ENCODE measurements at regions of chr17 and their contacts with region 1.

Region 1: DNA sequence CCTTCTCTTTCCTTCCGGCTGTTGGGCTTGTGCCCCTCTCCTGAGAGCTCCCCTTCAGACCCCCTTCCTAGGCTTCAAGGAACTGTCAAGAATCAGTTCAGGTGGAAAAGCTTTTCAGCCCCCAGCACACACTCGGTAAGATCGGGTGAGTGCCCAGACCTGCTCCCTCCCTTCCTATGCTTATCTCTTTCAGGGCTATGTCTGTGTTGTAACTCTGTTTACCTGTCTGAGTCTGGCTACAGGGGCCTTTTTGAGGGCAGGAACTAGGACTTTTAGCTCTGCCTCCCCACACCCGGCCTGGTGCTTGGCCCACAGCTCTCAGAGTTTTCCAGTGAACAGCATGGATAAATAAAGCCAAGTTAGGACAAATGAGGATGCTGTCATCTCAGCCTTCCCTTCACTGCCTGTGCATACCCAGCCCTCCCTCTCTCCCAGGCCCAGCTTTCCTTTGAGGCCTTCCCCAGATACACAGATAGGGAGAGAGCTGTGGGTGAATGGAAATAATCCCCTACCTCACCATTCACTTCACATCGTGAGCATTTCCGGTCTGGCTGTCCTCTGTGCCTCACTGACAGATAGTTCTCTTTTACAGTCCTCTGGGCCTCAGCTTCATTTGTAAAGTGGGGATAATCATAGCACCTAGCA is 5.7 kb upstream of the MRPS23 start:
- DNase-seq: peak; percentile 26

Region 2: DNA sequence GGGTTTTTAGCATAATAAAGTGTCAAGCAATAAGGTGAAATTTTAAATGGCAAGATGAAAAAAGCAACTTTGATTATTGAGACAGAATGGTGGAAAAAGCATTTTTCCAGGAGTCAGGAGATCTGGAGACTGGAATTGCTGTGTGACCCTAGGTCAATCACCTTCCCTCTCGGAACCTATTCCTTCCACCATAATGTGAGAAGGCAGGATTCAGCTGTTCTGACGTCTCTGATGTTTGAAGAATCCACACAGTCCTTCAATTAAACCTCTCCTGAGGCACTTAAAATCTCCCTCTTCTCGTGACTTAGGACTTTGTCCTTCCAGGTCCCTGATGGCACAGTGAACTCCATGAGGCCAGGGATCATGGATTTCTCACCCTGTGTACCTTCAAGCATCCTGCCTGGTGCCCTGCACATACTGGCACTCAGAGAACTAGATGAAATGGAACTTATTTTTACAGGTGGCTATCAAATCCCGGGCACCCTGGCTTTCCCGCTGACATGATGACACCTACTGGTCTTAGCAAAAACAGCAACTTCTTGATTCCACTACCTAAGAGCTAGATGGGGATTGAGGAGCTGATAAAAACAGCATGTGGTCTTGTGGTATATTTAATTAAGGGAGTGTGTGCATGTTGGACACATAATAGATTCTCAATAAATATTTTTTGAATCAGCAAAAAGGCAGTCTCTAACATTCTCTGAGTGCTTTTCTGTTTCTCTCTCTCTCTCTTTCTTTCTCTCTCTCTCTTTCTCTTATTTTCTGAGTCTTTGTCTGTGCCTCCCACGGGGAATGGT is 108.1 kb before region 1 on chr17:
- intact Hi-C with region 1: no loop called
- DNase-seq: no peak

Region 3: GRCh38 chr17:57995076-57995956 is 139.8 kb after region 1 on chr17:
- intact Hi-C with region 1: loop called (anchors 1 kb)
- DNase-seq: peak; percentile 78

Region 4: DNA sequence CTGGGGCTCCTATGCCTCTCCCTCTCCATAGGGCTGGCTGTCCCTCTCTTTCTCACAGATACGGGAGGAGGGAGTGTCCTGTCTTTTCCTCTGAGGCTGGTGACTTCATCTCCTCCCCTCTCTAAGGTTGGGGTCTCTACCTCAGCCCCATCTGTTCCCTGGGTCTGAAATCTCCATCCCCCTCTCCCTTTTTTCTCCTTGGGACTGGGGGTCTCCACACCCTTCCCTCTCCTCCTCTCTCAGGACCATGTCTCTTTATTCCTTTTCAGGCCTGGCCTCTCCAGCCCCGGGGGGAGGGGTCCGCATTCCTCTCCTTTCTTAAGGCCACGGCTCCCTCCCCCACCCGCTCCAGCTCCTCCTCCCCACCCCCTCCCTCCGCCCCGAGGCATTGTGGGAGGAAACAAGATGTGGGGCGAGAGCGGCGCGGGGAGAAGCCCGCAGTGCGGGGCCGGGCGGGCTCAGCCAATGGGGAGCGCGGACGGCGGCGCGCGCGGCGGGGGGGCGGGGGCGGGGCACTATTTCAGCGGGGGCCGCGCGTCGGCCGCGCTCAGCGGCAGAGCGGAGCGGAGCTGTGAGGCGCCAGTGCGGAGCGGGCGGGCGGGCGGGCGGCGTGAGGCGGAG is 227.5 kb after region 1 on chr17 and contains the start of gene DYNLL2:
- intact Hi-C with region 1: loop called (anchors 5 kb)
- DNase-seq: peak; percentile 95
- total RNA-seq, gene DYNLL2: 79.4 TPM

Region 5: GRCh38 chr17:58112970-58113631 is 257.6 kb after region 1 on chr17:
- intact Hi-C with region 1: loop called (anchors 5 kb)
- DNase-seq: peak; percentile 88

Measured in cardiac septum (tissue), 1 donor.